ENCODE measurements at regions of chr2 and their contacts with region 1.

Region 1: DNA sequence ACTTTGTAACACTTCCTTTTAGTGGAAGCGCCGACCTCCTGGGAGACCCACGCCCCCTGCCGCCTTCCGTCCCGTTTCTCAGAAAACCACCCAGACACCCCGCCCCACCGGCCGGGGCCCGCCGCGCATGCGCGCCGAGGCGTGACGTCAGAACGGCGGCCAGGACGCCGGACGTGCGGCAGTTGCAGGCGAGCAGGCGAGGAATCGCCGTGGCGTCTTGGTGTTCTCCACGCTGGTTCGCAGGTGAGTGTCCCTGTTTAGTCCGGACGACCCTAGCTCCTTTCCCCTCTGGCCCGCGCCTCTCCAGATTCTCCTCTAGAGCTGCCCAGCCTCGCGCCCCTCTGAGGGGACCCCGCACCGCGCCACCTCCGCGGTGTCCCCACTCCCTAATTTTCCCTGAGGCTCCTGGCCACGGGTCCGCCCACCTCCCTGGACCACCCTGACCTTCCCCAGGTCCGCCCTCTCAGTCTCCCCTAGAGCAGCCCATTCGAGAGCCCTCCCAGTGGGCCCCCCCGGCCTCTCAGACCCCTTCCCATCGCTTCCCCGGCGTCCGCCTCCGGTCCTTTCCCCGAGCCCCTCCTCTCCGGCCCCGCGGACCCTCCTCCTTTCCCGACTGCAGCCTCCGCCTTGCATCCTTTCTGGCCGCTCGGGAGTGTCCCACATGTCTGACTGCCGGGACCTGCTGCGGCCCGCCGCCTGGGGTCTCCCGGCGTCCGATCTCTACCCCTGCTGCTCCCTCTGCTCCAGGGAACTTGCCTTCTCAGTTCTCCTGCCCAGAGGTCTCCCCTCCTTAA is at the start of gene PLEKHB2:
- DNase-seq: peak; percentile 99
- ATAC-seq: peak; percentile 78
- H3K4me3 Mint-ChIP-seq: peak within 1 kb of the TSS; percentile 99
- H3K27ac Mint-ChIP-seq: peak within 1 kb of the TSS; percentile 98
- H3K4me1 Mint-ChIP-seq: peaks cover 36% of the 10 kb centered on the region
- H3K27me3 Mint-ChIP-seq: no peaks in the 10 kb centered on the region
- total RNA-seq, gene PLEKHB2: 54.2 to 55.9 TPM

Region 2: GRCh38 chr2:131093006-131093695 is 12.2 kb before region 1 on chr2 and contains the start of gene FAM168B:
- POLR2A ChIA-PET with region 1: interaction called, 86 read pairs
- DNase-seq: peak; percentile 97
- ATAC-seq: peak; percentile 84
- H3K4me3 Mint-ChIP-seq: peak within 1 kb of the TSS; percentile 96
- H3K27ac Mint-ChIP-seq: peak within 1 kb of the TSS; percentile 98
- H3K4me1 Mint-ChIP-seq: peaks cover 17% of the 10 kb centered on the region
- H3K27me3 Mint-ChIP-seq: peaks cover 2% of the 10 kb centered on the region
- total RNA-seq, gene FAM168B: 63.0 to 67.9 TPM

Region 3: DNA sequence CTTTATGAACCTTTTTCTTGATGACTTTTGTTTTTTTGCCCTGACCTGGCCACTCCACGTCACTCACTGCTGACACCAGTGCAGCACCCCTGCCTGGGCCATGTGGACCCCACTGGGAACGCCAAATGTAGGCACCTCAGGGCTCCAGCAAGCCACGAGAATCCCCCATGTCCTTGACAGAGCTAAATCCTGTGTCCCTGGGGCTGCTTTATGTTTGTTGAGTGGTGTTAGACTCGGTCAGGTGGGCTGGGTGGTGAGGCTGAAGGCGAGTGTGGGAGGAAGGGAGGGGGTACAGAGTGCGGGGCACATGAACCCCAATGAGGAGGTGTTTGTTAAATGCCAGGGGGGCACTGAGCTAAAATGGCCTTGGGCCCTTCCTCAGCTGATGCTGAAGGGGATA is 15.1 kb after region 1 on chr2:
- POLR2A ChIA-PET with region 1: no interaction called
- DNase-seq: no peak
- ATAC-seq: no peak
- H3K4me3 Mint-ChIP-seq: no peak overlapping the region
- H3K27ac Mint-ChIP-seq: peak overlapping the region; percentile 43
- H3K4me1 Mint-ChIP-seq: peaks cover 7% of the 10 kb centered on the region
- H3K27me3 Mint-ChIP-seq: no peaks in the 10 kb centered on the region

Measured in activated naive CD8-positive, alpha-beta T cell treated with anti-CD3 and anti-CD28 coated beads, Interleukin-2, amount 10 ng/mL, durations not matched to agents 7 days and 5 days (primary cell).